ENCODE measurements at regions of chr3 and their contacts with region 1.

Region 1: GRCh38 chr3:47989981-47990440 is 26.2 kb downstream of the MAP4 start:
- DNase-seq: peak; percentile 85
- H3K4me3 ChIP-seq: no peak overlapping the region
- H3K27ac ChIP-seq: no peak overlapping the region
- H3K4me1 ChIP-seq: peaks cover 13% of the 10 kb centered on the region
- H3K27me3 ChIP-seq: no peaks in the 10 kb centered on the region
- CTCF ChIP-seq: peak; percentile 73 to 87
- POLR2A ChIP-seq: no peak

Region 2: DNA sequence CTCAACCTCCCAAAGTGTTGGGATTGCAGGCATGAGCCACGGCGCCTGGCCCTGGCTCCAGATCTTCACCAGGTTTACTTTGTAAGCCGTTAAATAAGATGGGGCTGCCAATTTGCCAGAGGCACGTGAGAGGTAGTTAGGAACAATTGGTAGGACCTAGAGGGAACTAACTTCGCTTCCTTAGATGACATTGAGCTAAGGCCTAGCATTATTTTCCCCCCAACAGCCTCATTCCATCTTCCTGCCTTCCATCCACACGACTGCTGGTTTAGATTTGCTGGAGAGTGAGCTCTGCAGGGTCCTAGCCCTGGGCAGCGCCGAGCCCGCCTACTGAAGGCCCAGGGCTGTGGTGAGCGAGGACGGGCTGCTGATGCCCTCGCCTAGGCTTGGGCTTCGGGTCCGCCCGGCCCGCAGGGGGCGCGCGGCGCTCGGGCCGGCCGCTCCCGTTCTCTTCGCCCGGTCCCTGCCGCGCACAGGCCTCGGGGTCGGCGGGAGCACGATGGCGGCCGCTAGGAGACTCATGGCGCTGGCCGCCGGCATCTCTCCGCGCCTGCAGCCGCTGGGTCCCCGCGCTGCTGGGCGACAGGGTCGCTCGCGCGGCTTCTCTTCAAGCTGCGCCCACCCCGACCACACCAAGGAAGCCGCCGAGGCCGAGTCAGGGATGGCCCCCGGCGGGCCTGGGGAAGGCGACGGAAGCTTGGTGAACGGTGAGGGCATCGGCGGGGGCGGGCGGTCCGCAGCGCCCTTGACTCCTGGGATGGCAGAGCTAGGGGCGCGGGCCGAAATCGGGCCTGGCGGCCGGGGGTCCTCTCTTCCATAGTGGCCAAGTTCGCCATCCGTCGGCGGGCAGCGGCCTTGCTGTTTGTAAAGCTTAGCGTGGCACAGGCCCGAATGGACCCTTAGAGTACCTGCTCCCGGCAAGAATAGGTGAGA is 165.2 kb before region 1 on chr3:
- CTCF ChIA-PET with region 1: interaction called, 21 read pairs
- POLR2A ChIA-PET with region 1: no interaction called
- dilution Hi-C with region 1: no loop called
- intact Hi-C with region 1: no loop called
- DNase-seq: peak; percentile 85
- H3K4me3 ChIP-seq: peak overlapping the region; percentile 78 to 97 (median 82)
- H3K27ac ChIP-seq: peak overlapping the region; percentile 68
- H3K4me1 ChIP-seq: peaks cover 19% of the 10 kb centered on the region
- H3K27me3 ChIP-seq: no peaks in the 10 kb centered on the region
- CTCF ChIP-seq: peak; percentile 82 to 96
- POLR2A ChIP-seq: peak; percentile 83

Region 3: DNA sequence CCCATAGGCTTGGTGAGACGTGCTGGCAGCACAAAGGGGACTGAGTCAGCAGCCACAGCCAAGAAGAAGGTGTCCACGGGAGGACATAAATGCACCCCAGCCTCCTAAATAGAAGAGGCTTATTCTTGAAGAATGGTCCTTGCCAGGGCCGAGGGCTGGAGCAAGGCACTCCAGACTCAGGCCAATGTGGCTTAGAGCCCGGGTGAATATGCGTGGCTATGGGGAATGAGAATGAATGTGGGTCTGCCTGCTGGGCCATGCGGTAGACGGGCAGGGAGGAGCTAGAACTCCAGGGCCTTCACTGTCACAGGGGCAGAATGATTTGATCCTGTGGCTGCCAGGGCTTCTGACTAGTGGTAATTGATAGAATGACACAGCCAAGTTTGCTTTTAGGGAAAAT is 153.0 kb before region 1 on chr3:
- CTCF ChIA-PET with region 1: interaction called, 90 read pairs
- POLR2A ChIA-PET with region 1: interaction called, 5 read pairs
- dilution Hi-C with region 1: no loop called
- intact Hi-C with region 1: loop called (anchors 1 kb)
- DNase-seq: no peak
- H3K4me3 ChIP-seq: no peak overlapping the region
- H3K27ac ChIP-seq: no peak overlapping the region
- H3K4me1 ChIP-seq: no peaks in the 10 kb centered on the region
- H3K27me3 ChIP-seq: no peaks in the 10 kb centered on the region
- CTCF ChIP-seq: no peak
- POLR2A ChIP-seq: no peak

Region 4: GRCh38 chr3:47849699-47850563 is 140.1 kb before region 1 on chr3:
- CTCF ChIA-PET with region 1: interaction called, 24 read pairs
- POLR2A ChIA-PET with region 1: interaction called, 3 read pairs
- dilution Hi-C with region 1: no loop called
- intact Hi-C with region 1: loop called (anchors 1 kb)
- DNase-seq: peak; percentile 31
- H3K4me3 ChIP-seq: no peak overlapping the region
- H3K27ac ChIP-seq: no peak overlapping the region
- H3K4me1 ChIP-seq: no peaks in the 10 kb centered on the region
- H3K27me3 ChIP-seq: no peaks in the 10 kb centered on the region
- CTCF ChIP-seq: peak; percentile 40 to 48
- POLR2A ChIP-seq: no peak

Region 5: DNA sequence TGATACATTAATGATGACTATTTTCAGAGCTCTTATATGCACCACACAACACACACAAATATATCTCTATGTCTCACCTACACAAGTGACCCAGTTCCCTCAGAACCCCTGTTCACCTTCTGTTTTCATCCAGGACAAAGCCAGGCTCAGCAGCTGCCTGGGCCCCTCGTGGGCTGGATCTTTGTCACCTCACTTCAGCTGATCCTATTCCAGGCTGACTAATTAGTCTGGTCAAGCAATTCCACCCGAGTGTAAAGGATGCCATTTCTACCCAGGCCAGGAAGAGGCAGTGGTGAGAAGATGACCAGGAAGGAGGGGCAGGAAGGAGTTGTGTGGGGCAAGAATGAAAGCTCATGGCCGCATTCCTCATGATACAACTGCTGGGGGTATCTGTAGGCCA is 124.8 kb before region 1 on chr3:
- CTCF ChIA-PET with region 1: interaction called, 24 read pairs
- POLR2A ChIA-PET with region 1: no interaction called
- dilution Hi-C with region 1: no loop called
- intact Hi-C with region 1: no loop called
- DNase-seq: no peak
- H3K4me3 ChIP-seq: no peak overlapping the region
- H3K27ac ChIP-seq: no peak overlapping the region
- H3K4me1 ChIP-seq: no peaks in the 10 kb centered on the region
- H3K27me3 ChIP-seq: no peaks in the 10 kb centered on the region
- CTCF ChIP-seq: no peak
- POLR2A ChIP-seq: no peak

Region 6: DNA sequence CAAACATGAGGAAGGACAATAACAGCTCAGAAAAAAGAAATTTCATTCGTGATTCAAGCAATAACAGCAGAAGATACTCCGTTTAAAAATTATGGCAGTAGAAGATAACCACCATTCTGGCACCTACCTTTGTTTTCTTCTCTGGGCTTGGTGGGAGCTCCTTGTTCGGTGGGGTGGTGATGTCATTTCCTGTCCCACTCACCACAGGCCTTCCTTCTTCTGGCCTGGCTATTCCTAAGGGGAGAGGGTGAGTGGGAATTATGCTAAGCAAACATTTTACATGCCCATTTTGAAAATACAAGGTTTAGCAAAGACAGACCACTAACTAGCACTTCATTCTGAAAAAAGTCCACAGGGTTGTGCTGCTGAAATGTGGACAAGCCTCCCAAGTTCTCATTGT is 112.7 kb before region 1 on chr3:
- CTCF ChIA-PET with region 1: interaction called, 10 read pairs
- POLR2A ChIA-PET with region 1: no interaction called
- dilution Hi-C with region 1: no loop called
- intact Hi-C with region 1: loop called (anchors 2 kb)
- DNase-seq: peak; percentile 46
- H3K4me3 ChIP-seq: no peak overlapping the region
- H3K27ac ChIP-seq: peak overlapping the region; percentile 72
- H3K4me1 ChIP-seq: peaks cover 20% of the 10 kb centered on the region
- H3K27me3 ChIP-seq: no peaks in the 10 kb centered on the region
- CTCF ChIP-seq: no peak
- POLR2A ChIP-seq: no peak

Region 7: GRCh38 chr3:47890828-47891612 is 99.0 kb before region 1 on chr3:
- CTCF ChIA-PET with region 1: interaction called, 10 read pairs
- POLR2A ChIA-PET with region 1: no interaction called
- dilution Hi-C with region 1: no loop called
- intact Hi-C with region 1: no loop called
- DNase-seq: no peak
- H3K4me3 ChIP-seq: no peak overlapping the region
- H3K27ac ChIP-seq: no peak overlapping the region
- H3K4me1 ChIP-seq: peaks cover 5% of the 10 kb centered on the region
- H3K27me3 ChIP-seq: no peaks in the 10 kb centered on the region
- CTCF ChIP-seq: no peak
- POLR2A ChIP-seq: no peak

Region 8: DNA sequence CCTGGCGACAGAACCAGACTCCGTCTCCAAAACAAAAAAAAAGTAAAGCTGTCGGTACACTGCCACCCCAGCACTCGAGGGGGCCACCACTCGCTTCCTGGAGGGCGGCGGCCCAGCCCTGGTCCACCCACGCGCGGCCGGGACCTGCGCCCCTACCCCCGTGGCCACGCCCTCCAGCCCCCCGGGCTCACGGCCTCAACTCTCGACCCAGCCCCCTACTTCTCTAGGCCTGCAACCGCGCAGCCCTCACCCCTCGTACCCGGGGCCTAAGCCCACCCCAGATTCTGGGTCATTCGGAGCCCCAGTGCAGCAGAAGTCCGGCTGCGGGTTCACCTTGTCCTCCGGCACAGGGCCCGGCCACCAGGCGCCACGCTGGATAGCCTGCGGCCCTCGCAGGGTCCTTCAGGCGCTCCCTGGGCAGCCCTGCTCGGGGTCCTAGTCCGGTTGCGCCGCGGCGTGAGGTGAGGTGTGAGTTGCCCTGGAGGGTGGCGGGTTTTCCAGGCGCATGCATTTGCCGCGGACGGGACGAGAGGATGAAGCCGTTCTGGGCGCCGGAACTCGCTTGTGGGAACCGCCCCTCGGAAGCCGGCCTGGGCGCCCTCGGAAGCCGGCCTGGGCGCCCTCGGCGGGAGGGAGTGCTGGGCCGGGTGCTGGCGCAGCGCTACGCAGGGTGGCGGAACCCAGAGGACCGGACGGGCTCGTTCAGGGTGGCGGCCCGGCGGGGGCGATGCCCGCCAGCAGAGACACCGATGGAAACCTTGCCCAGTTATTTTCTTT is 311.2 kb after region 1 on chr3:
- CTCF ChIA-PET with region 1: no interaction called
- POLR2A ChIA-PET with region 1: no interaction called
- dilution Hi-C with region 1: no loop called
- intact Hi-C with region 1: no loop called
- DNase-seq: peak; percentile 88
- H3K4me3 ChIP-seq: peak within 1 kb of the TSS; percentile 57 to 86 (median 65)
- H3K27ac ChIP-seq: peak within 1 kb of the TSS; percentile 51
- H3K4me1 ChIP-seq: peaks cover 8% of the 10 kb centered on the region
- H3K27me3 ChIP-seq: peaks cover 2 to 5% of the 10 kb centered on the region in 2 experiments
- CTCF ChIP-seq: no peak
- POLR2A ChIP-seq: no peak

Measured in endothelial cell of umbilical vein (primary cell).